Natural killer cell (primary cell): ENCODE measurements at regions of chr13 and their contacts with region 1.

Region 1: GRCh38 chr13:109786457-109787134 is at the start of gene IRS2:
- DNase-seq: peak; percentile 96 to 97
- ATAC-seq: peak; percentile 82 to 95 (median 87)
- H3K4me3 ChIP-seq: peak within 1 kb of the TSS; percentile 56
- H3K4me3 Mint-ChIP-seq: peak within 1 kb of the TSS; percentile 90
- H3K27ac ChIP-seq: peak within 1 kb of the TSS; percentile 67
- H3K27ac Mint-ChIP-seq: peak within 1 kb of the TSS; percentile 77 to 87
- H3K4me1 ChIP-seq: peaks cover 12% of the 10 kb centered on the region
- H3K4me1 Mint-ChIP-seq: peaks cover 16 to 19% of the 10 kb centered on the region in 2 donors
- H3K27me3 ChIP-seq: no peaks in the 10 kb centered on the region
- H3K27me3 Mint-ChIP-seq: peaks cover 7 to 11% of the 10 kb centered on the region in 2 donors
- CTCF ChIP-seq: no peak
- total RNA-seq, gene IRS2: 39.8 to 79.1 (median 60.9) TPM

Region 2: DNA sequence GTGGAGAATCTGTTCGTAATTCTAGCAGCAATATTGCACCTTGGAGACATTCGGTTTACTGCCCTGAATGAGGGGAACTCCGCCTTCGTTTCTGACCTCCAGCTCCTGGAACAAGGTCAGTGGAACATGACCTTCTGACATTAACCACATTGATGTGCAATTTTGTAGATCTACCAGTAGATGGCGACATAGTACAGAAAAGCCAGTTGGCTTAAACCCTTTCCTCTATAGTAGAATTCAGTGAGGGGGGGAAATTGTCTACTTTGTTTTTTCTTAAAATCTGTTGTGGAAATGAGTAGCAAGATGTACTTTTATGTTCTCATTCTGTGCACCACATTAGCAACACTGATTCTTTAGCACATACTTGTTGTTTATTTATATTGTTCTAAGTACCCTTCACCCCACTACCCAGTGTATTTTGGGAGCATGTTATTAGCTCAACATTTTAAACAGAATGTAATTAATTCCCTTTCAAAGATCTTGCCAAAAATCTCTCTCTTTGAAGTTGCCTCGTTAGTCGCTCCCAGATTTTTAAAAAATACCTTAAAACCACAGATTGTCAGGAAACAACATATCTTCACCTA is 825.0 kb before region 1 on chr13:
- intact Hi-C with region 1: loop called (anchors 1 kb)
- DNase-seq: peak in 1 of 2 donors; percentile 64
- ATAC-seq: peak; percentile 70 to 90 (median 73)
- H3K4me3 ChIP-seq: no peak overlapping the region
- H3K4me3 Mint-ChIP-seq: no peak overlapping the region
- H3K27ac ChIP-seq: no peak overlapping the region
- H3K27ac Mint-ChIP-seq: no peak overlapping the region
- H3K4me1 ChIP-seq: no peaks in the 10 kb centered on the region
- H3K4me1 Mint-ChIP-seq: no peaks in the 10 kb centered on the region
- H3K27me3 ChIP-seq: no peaks in the 10 kb centered on the region
- H3K27me3 Mint-ChIP-seq: no peaks in the 10 kb centered on the region
- CTCF ChIP-seq: peak; percentile 96

Region 3: GRCh38 chr13:109145631-109146030 is 641.0 kb before region 1 on chr13:
- intact Hi-C with region 1: loop called (anchors 2 kb)
- DNase-seq: peak in 1 of 2 donors; percentile 35
- ATAC-seq: peak in 2 of 3 donors; percentile 52 to 64
- H3K4me3 ChIP-seq: no peak overlapping the region
- H3K4me3 Mint-ChIP-seq: no peak overlapping the region
- H3K27ac ChIP-seq: no peak overlapping the region
- H3K27ac Mint-ChIP-seq: no peak overlapping the region
- H3K4me1 ChIP-seq: no peaks in the 10 kb centered on the region
- H3K4me1 Mint-ChIP-seq: no peaks in the 10 kb centered on the region
- H3K27me3 ChIP-seq: no peaks in the 10 kb centered on the region
- H3K27me3 Mint-ChIP-seq: peaks cover 20 to 45% of the 10 kb centered on the region in 2 donors
- CTCF ChIP-seq: peak; percentile 21

Region 4: GRCh38 chr13:109610517-109610916 is 176.1 kb before region 1 on chr13:
- intact Hi-C with region 1: loop called (anchors 1 kb)
- DNase-seq: peak; percentile 24 to 59
- ATAC-seq: peak; percentile 46 to 75 (median 72)
- H3K4me3 ChIP-seq: no peak overlapping the region
- H3K4me3 Mint-ChIP-seq: no peak overlapping the region
- H3K27ac ChIP-seq: no peak overlapping the region
- H3K27ac Mint-ChIP-seq: no peak overlapping the region
- H3K4me1 ChIP-seq: no peaks in the 10 kb centered on the region
- H3K4me1 Mint-ChIP-seq: no peaks in the 10 kb centered on the region
- H3K27me3 ChIP-seq: no peaks in the 10 kb centered on the region
- H3K27me3 Mint-ChIP-seq: peaks cover 10 to 43% of the 10 kb centered on the region in 2 donors
- CTCF ChIP-seq: peak; percentile 19

Region 5: GRCh38 chr13:109704771-109705628 is 81.6 kb before region 1 on chr13:
- intact Hi-C with region 1: loop called (anchors 5 kb)
- DNase-seq: no peak
- ATAC-seq: peak in 1 of 3 donors; percentile 27
- H3K4me3 ChIP-seq: no peak overlapping the region
- H3K4me3 Mint-ChIP-seq: peak overlapping the region; percentile 28
- H3K27ac ChIP-seq: no peak overlapping the region
- H3K27ac Mint-ChIP-seq: no peak overlapping the region
- H3K4me1 ChIP-seq: peaks cover 34% of the 10 kb centered on the region
- H3K4me1 Mint-ChIP-seq: peaks cover 39 to 45% of the 10 kb centered on the region in 2 donors
- H3K27me3 ChIP-seq: peaks cover 35% of the 10 kb centered on the region
- H3K27me3 Mint-ChIP-seq: peaks cover 51 to 58% of the 10 kb centered on the region in 2 donors
- CTCF ChIP-seq: no peak

Region 6: GRCh38 chr13:109809216-109809932 is 22.8 kb after region 1 on chr13:
- intact Hi-C with region 1: no loop called
- DNase-seq: no peak
- ATAC-seq: no peak
- H3K4me3 ChIP-seq: no peak overlapping the region
- H3K4me3 Mint-ChIP-seq: no peak overlapping the region
- H3K27ac ChIP-seq: no peak overlapping the region
- H3K27ac Mint-ChIP-seq: no peak overlapping the region
- H3K4me1 ChIP-seq: no peaks in the 10 kb centered on the region
- H3K4me1 Mint-ChIP-seq: no peaks in the 10 kb centered on the region
- H3K27me3 ChIP-seq: peaks cover 3% of the 10 kb centered on the region
- H3K27me3 Mint-ChIP-seq: peaks cover 26 to 39% of the 10 kb centered on the region in 2 donors
- CTCF ChIP-seq: no peak

Region 7: DNA sequence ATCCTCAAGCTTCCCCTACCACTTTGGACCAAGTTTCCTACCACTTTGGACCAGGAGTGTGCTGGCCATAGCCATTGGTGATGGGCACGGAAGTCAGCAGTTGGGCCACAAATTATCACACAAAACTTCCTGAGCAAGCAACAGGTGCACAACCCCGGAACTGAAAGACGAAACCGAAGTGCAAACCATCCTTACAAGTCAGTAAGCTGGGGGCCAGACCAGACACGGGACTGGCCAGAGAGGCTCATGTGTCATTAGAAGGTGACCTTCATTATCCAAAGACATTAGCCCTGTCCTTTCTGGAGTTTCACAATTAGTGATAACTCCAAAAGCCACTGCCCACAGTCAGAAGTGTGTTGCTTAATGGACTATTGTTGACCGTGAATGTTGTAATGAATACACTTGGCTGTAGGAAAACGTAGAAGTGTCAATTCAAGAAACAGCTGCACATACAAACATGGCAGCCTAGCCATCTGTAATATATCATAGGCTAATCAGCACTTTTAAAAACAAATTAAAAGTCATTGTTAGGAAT is 243.9 kb after region 1 on chr13:
- intact Hi-C with region 1: no loop called
- DNase-seq: no peak
- ATAC-seq: no peak
- H3K4me3 ChIP-seq: no peak overlapping the region
- H3K4me3 Mint-ChIP-seq: no peak overlapping the region
- H3K27ac ChIP-seq: no peak overlapping the region
- H3K27ac Mint-ChIP-seq: no peak overlapping the region
- H3K4me1 ChIP-seq: no peaks in the 10 kb centered on the region
- H3K4me1 Mint-ChIP-seq: no peaks in the 10 kb centered on the region
- H3K27me3 ChIP-seq: no peaks in the 10 kb centered on the region
- H3K27me3 Mint-ChIP-seq: no peaks in the 10 kb centered on the region
- CTCF ChIP-seq: no peak